ENCODE measurements at regions of chr21 and their contacts with region 1.

Region 1: DNA sequence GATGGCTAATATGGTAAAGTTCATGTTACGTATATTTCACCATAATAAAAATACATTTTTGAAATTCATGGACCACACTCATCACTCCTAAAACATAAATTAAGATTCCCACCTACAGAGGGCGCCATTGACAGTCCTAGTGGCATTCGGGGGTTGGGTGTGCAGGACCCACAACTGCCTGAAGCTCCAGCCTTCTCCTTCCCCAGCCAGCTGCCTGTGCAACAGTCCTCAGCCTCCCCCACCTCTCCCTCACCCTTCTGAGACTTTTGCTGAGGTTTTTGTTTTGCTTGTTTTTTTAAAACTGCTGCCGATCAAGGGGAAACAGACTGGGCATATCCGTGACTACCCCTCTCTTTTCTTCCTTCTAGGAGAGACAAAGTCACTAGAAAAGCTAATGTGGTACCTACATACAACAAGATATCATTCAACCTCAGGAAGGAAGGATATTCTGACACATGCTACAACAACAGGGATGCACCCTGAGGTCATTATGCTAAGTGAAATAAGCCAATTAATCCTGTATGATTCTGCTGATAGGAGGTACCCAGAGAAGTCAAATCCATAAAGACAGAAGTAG is 9.2 kb upstream of the EVA1C start:
- DNase-seq: peak in 2 of 4 donors; percentile 57 to 77
- ATAC-seq: peak; percentile 97
- H3K4me3 ChIP-seq: no peak overlapping the region
- H3K27ac ChIP-seq: no peak overlapping the region
- H3K4me1 ChIP-seq: peaks cover 0 to 8% of the 10 kb centered on the region in 2 donors
- H3K27me3 ChIP-seq: peaks cover 0 to 14% of the 10 kb centered on the region in 2 donors
- CTCF ChIP-seq: peak; percentile 55 to 69

Region 2: GRCh38 chr21:32592929-32593502 is 189.7 kb after region 1 on chr21:
- intact Hi-C with region 1: loop called in 1 of 2 experiments (anchors 5 kb)
- DNase-seq: no peak
- ATAC-seq: no peak
- H3K4me3 ChIP-seq: no peak overlapping the region
- H3K27ac ChIP-seq: no peak overlapping the region
- H3K4me1 ChIP-seq: no peaks in the 10 kb centered on the region
- H3K27me3 ChIP-seq: no peaks in the 10 kb centered on the region
- CTCF ChIP-seq: no peak

Region 3: DNA sequence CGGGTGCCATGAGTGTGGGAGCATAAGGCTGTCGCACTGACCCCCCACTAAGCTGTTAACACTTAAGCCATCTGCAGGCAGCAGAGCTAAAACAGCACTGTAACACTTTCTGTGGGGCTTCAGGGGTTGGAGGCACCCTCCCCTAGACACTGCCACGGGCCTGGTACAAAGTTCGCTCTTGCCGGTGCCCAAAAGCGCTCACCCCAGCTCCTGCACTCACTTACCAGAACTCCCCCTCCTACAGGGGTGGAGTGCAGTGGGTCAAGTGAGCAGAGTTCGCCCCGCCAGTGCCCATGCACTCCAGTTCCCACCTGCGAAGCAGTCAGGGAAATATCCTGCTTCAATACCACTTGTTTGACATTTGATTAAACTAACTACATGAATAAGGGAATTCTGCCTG is 255.2 kb after region 1 on chr21:
- intact Hi-C with region 1: no loop called
- DNase-seq: no peak
- ATAC-seq: no peak
- H3K4me3 ChIP-seq: no peak overlapping the region
- H3K27ac ChIP-seq: no peak overlapping the region
- H3K4me1 ChIP-seq: no peaks in the 10 kb centered on the region
- H3K27me3 ChIP-seq: no peaks in the 10 kb centered on the region
- CTCF ChIP-seq: no peak

Measured in left lung (tissue), 14 donors.